ENCODE measurements at regions of chr10 and their contacts with region 1.

Region 1: GRCh38 chr10:78981257-78981969 is 87.4 kb upstream of the ZMIZ1 start:
- DNase-seq: no peak
- H3K4me3 ChIP-seq: no peak overlapping the region
- H3K27ac ChIP-seq: no peak overlapping the region
- H3K4me1 ChIP-seq: peaks cover 18% of the 10 kb centered on the region
- H3K27me3 ChIP-seq: no peaks in the 10 kb centered on the region
- CTCF ChIP-seq: no peak

Region 2: DNA sequence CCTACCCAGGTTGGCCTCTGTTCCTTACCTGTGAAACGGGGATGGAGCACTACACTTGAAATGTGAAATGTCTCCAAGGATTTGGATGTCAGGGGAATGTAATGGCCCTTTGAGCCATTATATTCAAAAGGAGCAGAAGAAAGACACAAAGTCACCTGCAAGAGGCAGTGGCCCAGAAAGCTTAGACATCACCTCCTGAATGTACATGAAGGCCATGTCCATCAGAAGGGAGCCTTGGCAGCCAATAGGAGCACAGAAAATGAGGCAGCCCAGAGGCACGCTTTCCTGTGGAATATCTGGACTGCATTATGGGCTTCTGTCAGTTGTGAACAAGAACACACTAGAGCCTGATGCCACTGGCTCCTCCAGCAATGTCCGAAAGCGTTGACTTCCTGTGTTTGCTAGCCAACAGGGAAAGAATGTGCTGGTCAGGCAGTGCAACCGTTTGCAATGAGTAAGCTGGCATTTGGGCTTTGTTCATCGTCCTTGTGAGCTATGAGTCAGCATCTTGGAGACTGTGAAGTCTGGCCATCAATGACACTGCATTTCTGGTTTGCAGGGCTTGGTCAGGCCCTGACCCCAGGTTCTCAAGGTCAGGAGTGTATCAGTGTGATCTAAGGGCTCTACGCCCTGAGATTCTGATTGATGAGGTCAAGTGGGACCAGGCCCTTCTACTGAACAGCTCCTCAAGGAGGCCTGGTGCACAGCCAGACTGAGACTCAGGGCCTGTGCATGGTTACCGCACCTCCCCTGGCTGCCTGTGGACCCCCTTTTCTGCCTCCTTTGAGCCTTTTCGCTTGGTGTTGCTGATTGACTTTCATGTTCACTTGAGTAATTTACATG is 725.4 kb before region 1 on chr10:
- CTCF ChIA-PET with region 1: no interaction called
- dilution Hi-C with region 1: no loop called
- in situ Hi-C with region 1: no loop called
- intact Hi-C with region 1: loop called (anchors 10 kb)
- DNase-seq: peak; percentile 92
- H3K4me3 ChIP-seq: no peak overlapping the region
- H3K27ac ChIP-seq: peak overlapping the region; percentile 51
- H3K4me1 ChIP-seq: peaks cover 20% of the 10 kb centered on the region
- H3K27me3 ChIP-seq: no peaks in the 10 kb centered on the region
- CTCF ChIP-seq: no peak

Region 3: GRCh38 chr10:78944723-78945312 is 36.6 kb before region 1 on chr10:
- CTCF ChIA-PET with region 1: no interaction called
- dilution Hi-C with region 1: loop called (anchors 5 kb)
- in situ Hi-C with region 1: no loop called
- intact Hi-C with region 1: no loop called
- DNase-seq: peak; percentile 68
- H3K4me3 ChIP-seq: no peak overlapping the region
- H3K27ac ChIP-seq: no peak overlapping the region
- H3K4me1 ChIP-seq: peaks cover 14% of the 10 kb centered on the region
- H3K27me3 ChIP-seq: peaks cover 1% of the 10 kb centered on the region
- CTCF ChIP-seq: no peak

Region 4: DNA sequence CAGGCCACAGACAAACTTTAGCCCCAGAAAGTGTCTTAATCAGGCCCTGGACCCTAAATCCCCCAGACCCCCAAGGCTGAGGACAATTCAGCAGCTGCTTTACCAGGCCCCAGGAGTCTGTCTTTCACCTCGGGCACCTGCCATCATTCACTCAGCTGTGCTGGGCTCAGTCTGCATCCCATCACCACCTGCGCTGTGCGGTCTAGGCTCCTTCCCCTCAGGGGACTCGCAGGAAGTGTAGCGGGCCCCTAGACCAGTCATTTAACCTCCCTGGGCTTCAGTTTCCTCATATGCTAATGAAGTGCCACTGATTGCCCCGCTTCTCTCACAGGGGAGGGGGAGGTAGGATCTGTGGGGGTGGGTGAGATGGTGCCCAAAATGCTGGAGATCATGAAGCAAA is 10.9 kb after region 1 on chr10:
- CTCF ChIA-PET with region 1: no interaction called
- dilution Hi-C with region 1: no loop called
- in situ Hi-C with region 1: no loop called
- intact Hi-C with region 1: no loop called
- DNase-seq: no peak
- H3K4me3 ChIP-seq: no peak overlapping the region
- H3K27ac ChIP-seq: no peak overlapping the region
- H3K4me1 ChIP-seq: peaks cover 7% of the 10 kb centered on the region
- H3K27me3 ChIP-seq: no peaks in the 10 kb centered on the region
- CTCF ChIP-seq: no peak

Region 5: GRCh38 chr10:79025199-79025832 is 43.9 kb after region 1 on chr10:
- CTCF ChIA-PET with region 1: no interaction called
- dilution Hi-C with region 1: loop called (anchors 5 kb)
- in situ Hi-C with region 1: no loop called
- intact Hi-C with region 1: no loop called
- DNase-seq: no peak
- H3K4me3 ChIP-seq: no peak overlapping the region
- H3K27ac ChIP-seq: no peak overlapping the region
- H3K4me1 ChIP-seq: no peaks in the 10 kb centered on the region
- H3K27me3 ChIP-seq: no peaks in the 10 kb centered on the region
- CTCF ChIP-seq: no peak